Gastrocnemius medialis (tissue), 4 donors: ENCODE measurements at regions of chr6 and their contacts with region 1.

Region 1: GRCh38 chr6:144284783-144285547 is at the start of gene UTRN:
- DNase-seq: peak; percentile 56 to 67
- ATAC-seq: peak; percentile 75 to 76
- H3K4me3 ChIP-seq: peak within 1 kb of the TSS; percentile 72 to 99 (median 82)
- H3K27ac ChIP-seq: peak within 1 kb of the TSS; percentile 90 to 96 (median 92)
- H3K4me1 ChIP-seq: peaks cover 15 to 21% of the 10 kb centered on the region in 2 donors
- H3K27me3 ChIP-seq: no peaks in the 10 kb centered on the region
- CTCF ChIP-seq: peak in 1 of 5 experiments; percentile 18
- POLR2A ChIP-seq: peak; percentile 59 to 75
- total RNA-seq, gene UTRN: 24.1 to 66.3 (median 40.1) TPM

Region 2: GRCh38 chr6:144063744-144064401 is 221.1 kb before region 1 on chr6:
- in situ Hi-C with region 1: no loop called
- intact Hi-C with region 1: no loop called
- DNase-seq: peak; percentile 63 to 65
- ATAC-seq: peak; percentile 81 to 88
- H3K4me3 ChIP-seq: peak overlapping the region; percentile 57 to 82 (median 74)
- H3K27ac ChIP-seq: peak overlapping the region in 1 of 4 donors; percentile 21
- H3K4me1 ChIP-seq: peaks cover 4% of the 10 kb centered on the region in 2 donors
- H3K27me3 ChIP-seq: peaks cover 8 to 19% (median 19%) of the 10 kb centered on the region in 3 donors
- CTCF ChIP-seq: peak in 3 of 5 experiments; percentile 8 to 44 (median 38)
- POLR2A ChIP-seq: peak; percentile 27 to 57

Region 3: DNA sequence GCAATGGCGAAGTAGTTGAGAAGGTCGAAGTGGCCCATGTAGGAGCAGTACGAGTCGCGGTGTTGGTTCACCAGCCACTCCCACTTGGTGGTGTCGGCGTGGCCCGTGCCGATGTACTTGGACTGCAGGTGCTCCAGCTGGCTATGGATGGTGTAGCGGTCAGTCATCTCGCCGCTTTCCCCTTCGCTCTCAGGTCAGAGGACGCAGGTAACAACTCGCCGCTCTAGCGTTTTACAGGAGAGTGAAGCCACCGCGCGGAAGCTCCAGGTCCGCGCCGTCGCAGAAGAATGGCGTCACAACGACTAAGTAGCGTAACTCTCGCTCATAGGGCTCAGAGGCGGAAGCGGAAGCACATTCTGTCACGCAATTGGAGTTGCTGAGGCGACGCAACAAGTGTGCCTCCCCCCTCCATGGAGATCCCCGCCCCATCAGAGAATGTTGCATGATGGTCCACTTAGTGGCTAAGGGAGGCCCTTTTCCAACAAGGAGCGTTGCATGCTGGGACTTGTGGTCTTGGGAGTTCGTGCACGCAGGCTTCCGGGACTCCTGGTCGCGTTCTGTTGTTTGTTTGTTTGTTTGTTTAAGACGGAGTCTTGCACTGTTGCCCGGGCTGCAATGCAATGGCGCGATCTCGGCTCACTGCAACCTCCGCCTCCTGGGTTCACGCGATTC is 189.5 kb before region 1 on chr6 and contains the start of gene SF3B5:
- in situ Hi-C with region 1: no loop called
- intact Hi-C with region 1: loop called (anchors 2 kb)
- DNase-seq: peak; percentile 99
- ATAC-seq: peak; percentile 99 to 100
- H3K4me3 ChIP-seq: peak within 1 kb of the TSS; percentile 77 to 93 (median 90)
- H3K27ac ChIP-seq: peak within 1 kb of the TSS; percentile 72 to 91 (median 80)
- H3K4me1 ChIP-seq: peaks cover 17 to 21% of the 10 kb centered on the region in 2 donors
- H3K27me3 ChIP-seq: no peaks in the 10 kb centered on the region
- CTCF ChIP-seq: peak in 1 of 5 experiments; percentile 18
- POLR2A ChIP-seq: peak; percentile 62 to 66
- total RNA-seq, gene SF3B5: 168 to 188 (median 186) TPM

Region 4: GRCh38 chr6:144265390-144265789 is 19.6 kb before region 1 on chr6:
- in situ Hi-C with region 1: no loop called
- intact Hi-C with region 1: loop called (anchors 1 kb)
- DNase-seq: no peak
- ATAC-seq: no peak
- H3K4me3 ChIP-seq: no peak overlapping the region
- H3K27ac ChIP-seq: peak overlapping the region; percentile 72 to 87 (median 76)
- H3K4me1 ChIP-seq: peaks cover 21 to 26% of the 10 kb centered on the region in 2 donors
- H3K27me3 ChIP-seq: no peaks in the 10 kb centered on the region
- CTCF ChIP-seq: no peak
- POLR2A ChIP-seq: no peak

Region 5: DNA sequence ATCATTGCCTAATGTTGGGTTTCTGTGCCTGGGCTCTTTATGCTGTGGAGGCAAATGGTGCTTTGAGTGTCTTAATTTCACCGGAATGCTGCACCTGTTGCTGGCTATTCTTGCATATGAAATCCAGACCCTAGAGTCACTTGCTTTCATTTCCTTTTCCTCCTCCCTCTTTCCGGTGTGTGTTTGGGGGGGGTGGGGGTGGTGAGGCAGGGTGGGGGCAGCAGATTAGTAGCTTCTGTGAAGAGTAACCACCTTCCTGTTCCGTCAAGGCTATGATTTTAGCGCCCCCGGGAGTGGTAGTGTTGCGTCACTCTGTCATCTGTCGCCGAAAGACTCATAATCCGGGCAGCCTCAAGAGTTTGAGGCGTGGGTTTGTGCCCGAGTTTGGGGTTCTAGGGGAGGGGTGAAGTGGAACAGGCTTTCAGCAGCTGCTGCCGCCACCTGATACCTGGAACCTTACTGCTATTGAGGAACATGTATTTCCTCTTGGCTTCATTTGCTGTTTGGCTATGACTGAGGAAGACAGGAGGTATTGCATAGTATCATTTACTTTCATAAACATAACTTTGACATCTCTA is 49.3 kb after region 1 on chr6:
- in situ Hi-C with region 1: no loop called
- intact Hi-C with region 1: loop called (anchors 1 kb)
- DNase-seq: peak; percentile 30 to 62
- ATAC-seq: peak; percentile 83 to 92
- H3K4me3 ChIP-seq: peak overlapping the region; percentile 35 to 56 (median 46)
- H3K27ac ChIP-seq: peak overlapping the region; percentile 78 to 86 (median 84)
- H3K4me1 ChIP-seq: peaks cover 50 to 63% of the 10 kb centered on the region in 2 donors
- H3K27me3 ChIP-seq: no peaks in the 10 kb centered on the region
- CTCF ChIP-seq: no peak
- POLR2A ChIP-seq: no peak

Region 6: DNA sequence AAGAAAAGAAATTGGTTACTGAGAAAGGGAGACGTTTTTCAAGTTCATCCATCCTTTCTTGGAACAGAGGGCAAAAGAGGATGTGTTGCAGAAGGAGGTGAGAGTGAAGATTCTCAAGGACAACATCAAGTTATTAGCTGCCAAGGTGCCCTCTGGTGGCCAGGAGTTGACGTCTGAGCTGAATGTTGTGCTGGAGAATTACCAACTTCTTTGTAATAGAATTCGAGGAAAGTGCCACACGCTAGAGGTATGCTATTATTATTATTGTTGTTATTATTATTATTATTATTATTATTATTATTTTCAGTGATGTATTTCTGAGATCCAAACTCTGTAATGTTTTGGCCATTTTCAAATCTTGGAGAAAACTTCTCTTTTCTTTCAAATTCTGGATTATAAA is 197.2 kb after region 1 on chr6:
- in situ Hi-C with region 1: loop called in 1 of 4 experiments (anchors 10 kb)
- intact Hi-C with region 1: loop called (anchors 5 kb)
- DNase-seq: peak; percentile 43 to 68
- ATAC-seq: peak; percentile 37 to 44
- H3K4me3 ChIP-seq: no peak overlapping the region
- H3K27ac ChIP-seq: no peak overlapping the region
- H3K4me1 ChIP-seq: peaks cover 25 to 35% of the 10 kb centered on the region in 2 donors
- H3K27me3 ChIP-seq: no peaks in the 10 kb centered on the region
- CTCF ChIP-seq: peak; percentile 34 to 72 (median 45)
- POLR2A ChIP-seq: no peak